Heart right ventricle (tissue), 16 donors: ENCODE measurements at regions of chr12 and their contacts with region 1.

Region 1: GRCh38 chr12:70645494-70646317 is 8.5 kb upstream of the PTPRB start:
- DNase-seq: peak; percentile 41 to 67
- ATAC-seq: peak; percentile 84 to 96 (median 95)
- H3K4me3 ChIP-seq: peak overlapping the region in 2 of 10 donors; percentile 16 to 19
- H3K27ac ChIP-seq: peak overlapping the region; percentile 0 to 85 (median 56)
- H3K4me1 ChIP-seq: peaks cover 6 to 67% (median 43%) of the 10 kb centered on the region in 9 donors
- H3K27me3 ChIP-seq: no peaks in the 10 kb centered on the region
- CTCF ChIP-seq: no peak

Region 2: GRCh38 chr12:70571705-70572268 is 73.9 kb before region 1 on chr12:
- intact Hi-C with region 1: no loop called
- DNase-seq: no peak
- ATAC-seq: no peak
- H3K4me3 ChIP-seq: no peak overlapping the region
- H3K27ac ChIP-seq: no peak overlapping the region
- H3K4me1 ChIP-seq: peaks cover 0 to 7% (median 0%) of the 10 kb centered on the region in 9 donors
- H3K27me3 ChIP-seq: no peaks in the 10 kb centered on the region
- CTCF ChIP-seq: no peak

Region 3: GRCh38 chr12:70590051-70590450 is 55.7 kb before region 1 on chr12:
- intact Hi-C with region 1: loop called in 3 of 10 experiments (anchors 5 to 10 kb)
- DNase-seq: peak; percentile 70 to 74
- ATAC-seq: peak in 6 of 8 donors; percentile 85 to 92 (median 88)
- H3K4me3 ChIP-seq: no peak overlapping the region
- H3K27ac ChIP-seq: no peak overlapping the region
- H3K4me1 ChIP-seq: peaks cover 0 to 42% (median 0%) of the 10 kb centered on the region in 9 donors
- H3K27me3 ChIP-seq: no peaks in the 10 kb centered on the region
- CTCF ChIP-seq: peak; percentile 65 to 93 (median 88)

Region 4: DNA sequence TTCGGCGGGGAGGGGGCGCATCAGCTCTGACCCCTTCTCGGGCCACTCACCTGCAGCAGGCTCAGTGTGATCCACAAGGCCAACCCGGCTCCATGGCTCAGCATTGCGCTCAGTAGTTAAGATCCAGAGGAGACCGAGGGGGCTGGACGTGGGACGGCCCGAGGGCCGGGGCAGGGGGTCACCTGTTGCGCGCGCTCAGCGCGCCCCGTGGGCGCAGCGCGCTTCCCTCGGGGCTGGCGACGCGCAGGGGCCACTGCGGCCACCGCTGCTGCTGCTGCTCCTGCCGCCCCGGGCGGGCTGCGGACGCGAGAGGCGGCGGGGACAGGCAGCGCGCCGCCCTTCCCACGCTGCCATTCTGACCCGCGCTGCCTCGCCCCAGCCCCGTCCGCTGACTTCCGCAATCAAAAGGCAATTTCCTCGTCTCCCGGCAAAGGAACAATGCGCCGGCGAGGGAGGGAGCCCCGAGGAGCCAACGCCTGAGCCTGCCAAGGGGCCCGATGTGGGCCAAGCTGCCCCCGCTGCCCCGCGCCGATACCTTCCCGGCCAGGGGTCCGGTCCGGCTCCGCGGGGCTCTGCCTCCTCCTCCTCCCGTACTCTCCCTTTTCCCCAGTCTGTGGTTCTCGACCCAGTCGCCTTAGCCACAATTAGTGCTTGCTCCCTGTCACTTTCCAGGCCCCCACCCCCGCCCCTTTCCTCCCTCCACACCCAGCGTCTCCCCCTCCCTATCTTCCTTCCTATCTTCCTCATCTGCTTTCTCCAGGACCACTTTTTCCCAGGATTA is 35.8 kb before region 1 on chr12:
- intact Hi-C with region 1: loop called in 2 of 10 experiments (anchors 5 kb)
- DNase-seq: peak; percentile 64 to 74
- ATAC-seq: peak; percentile 84 to 94 (median 88)
- H3K4me3 ChIP-seq: peak overlapping the region; percentile 42 to 69 (median 60)
- H3K27ac ChIP-seq: peak overlapping the region; percentile 68 to 90 (median 83)
- H3K4me1 ChIP-seq: peaks cover 0 to 57% (median 8%) of the 10 kb centered on the region in 9 donors
- H3K27me3 ChIP-seq: peaks cover 0 to 49% (median 19%) of the 10 kb centered on the region in 7 donors
- CTCF ChIP-seq: no peak

Region 5: DNA sequence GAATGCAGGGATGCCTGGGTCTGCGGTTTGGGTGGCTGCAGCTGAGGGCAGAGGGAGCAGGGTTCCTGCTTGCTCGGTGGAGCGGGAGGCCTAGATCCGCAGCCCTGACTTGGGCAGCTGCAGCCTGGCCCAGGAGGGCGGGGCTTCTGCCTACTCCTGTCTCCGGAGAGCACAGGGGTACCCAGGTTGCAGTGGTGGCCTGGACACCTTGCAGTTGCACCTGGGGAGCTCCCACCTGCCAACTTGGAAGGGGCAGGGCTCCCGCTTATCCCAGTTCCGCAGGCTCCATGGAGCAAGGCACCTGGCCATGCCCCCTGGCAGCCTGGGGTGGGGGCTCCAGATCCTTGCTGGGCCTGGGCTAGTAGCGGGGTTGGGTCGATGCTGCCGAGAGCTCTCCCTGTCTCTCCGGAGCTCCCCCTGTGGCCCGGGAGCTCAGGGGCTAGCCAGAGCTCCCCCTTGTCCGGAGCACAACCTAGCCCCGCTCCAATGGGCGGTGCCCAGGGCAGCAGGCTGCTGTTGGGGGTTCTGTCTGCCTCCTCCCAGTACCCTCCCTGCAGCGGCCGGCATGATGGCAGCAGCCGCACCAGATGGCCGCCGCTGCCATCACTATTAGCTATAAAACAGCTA is 138.4 kb after region 1 on chr12:
- intact Hi-C with region 1: no loop called
- DNase-seq: no peak
- ATAC-seq: no peak
- H3K4me3 ChIP-seq: no peak overlapping the region
- H3K27ac ChIP-seq: no peak overlapping the region
- H3K4me1 ChIP-seq: no peaks in the 10 kb centered on the region
- H3K27me3 ChIP-seq: no peaks in the 10 kb centered on the region
- CTCF ChIP-seq: no peak